GM13977 (cell line): ENCODE measurements at regions of chr22 and their contacts with region 1.

Region 1: GRCh38 chr22:36977947-36978660 is 41.1 kb downstream of the TST start:
- DNase-seq: peak; percentile 91
- CTCF ChIP-seq: peak; percentile 83

Region 2: GRCh38 chr22:36781656-36782627 is 196.2 kb before region 1 on chr22:
- in situ Hi-C with region 1: loop called (anchors 10 kb)
- DNase-seq: peak; percentile 87
- CTCF ChIP-seq: peak; percentile 97

Region 3: GRCh38 chr22:36816636-36817524 is 161.2 kb before region 1 on chr22 and contains the start of gene PVALB:
- in situ Hi-C with region 1: no loop called
- DNase-seq: peak; percentile 49
- CTCF ChIP-seq: no peak